ENCODE measurements at regions of chr11 and their contacts with region 1.

Region 1: GRCh38 chr11:61967116-61967923 is at the start of gene FTH1:
- DNase-seq: peak; percentile 77 to 95
- ATAC-seq: peak; percentile 16 to 62
- H3K4me3 ChIP-seq: peak within 1 kb of the TSS; percentile 96
- H3K27ac ChIP-seq: peak within 1 kb of the TSS; percentile 97 to 99
- H3K4me1 ChIP-seq: peaks cover 59% of the 10 kb centered on the region
- CTCF ChIP-seq: no peak
- EP300 ChIP-seq: no peak; a peak in 1 of 5 replicates
- POLR2A ChIP-seq: peak; percentile 93
- RAD21 ChIP-seq: peak in 1 of 2 experiments; percentile 44; a peak in 2 of 5 replicates
- polyA plus RNA-seq, gene FTH1: 2,791 and 4,959 TPM in 2 replicates

Region 2: DNA sequence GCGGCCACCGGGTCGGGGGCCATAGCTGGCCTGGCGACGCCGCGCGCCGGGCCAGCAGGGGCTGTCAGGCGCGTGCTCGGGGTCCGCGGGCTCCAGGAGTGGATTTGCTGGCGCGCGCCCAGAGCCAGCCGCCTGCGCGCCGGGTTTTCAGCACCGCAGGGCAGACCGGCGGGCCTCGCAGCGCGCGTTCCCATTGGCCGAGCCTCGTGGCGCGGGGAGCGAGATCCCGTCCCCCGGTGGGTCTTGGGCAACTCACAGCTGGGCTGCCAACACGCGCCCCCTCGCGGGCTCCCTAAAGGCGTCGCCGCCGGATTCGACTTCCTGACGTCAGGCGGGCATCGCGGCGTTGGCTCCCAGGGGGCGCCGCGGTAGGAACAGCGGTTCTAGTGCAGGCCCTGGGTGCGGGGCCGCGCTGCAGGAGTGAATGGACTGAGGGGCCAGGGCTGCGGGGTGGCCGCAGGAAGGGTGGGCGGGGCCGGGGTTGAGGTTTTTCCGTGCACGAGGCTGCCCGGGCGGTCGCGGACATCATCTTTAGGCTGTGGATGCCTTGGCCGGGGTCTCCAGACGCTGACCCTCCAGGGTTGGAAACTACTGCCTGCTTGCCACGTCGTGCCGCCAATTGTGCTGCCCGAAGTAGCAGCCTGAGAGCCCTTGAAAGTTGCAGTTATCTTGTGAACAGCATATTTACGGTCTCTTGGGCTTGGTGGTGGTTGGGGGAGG is 150.4 kb before region 1 on chr11 and contains the start of gene FADS1:
- CTCF ChIA-PET with region 1: interaction called, 4 read pairs
- POLR2A ChIA-PET with region 1: interaction called, 12 read pairs
- DNase-seq: peak; percentile 96 to 97
- ATAC-seq: peak; percentile 67 to 75
- H3K4me3 ChIP-seq: peak within 1 kb of the TSS; percentile 83
- H3K27ac ChIP-seq: peak within 1 kb of the TSS; percentile 98 to 99
- H3K4me1 ChIP-seq: peaks cover 44% of the 10 kb centered on the region
- CTCF ChIP-seq: peak; percentile 76
- EP300 ChIP-seq: 0 out of 5 replicates have a peak, but pooled peaks of 1 of the 2 experiments have one; percentile 10
- POLR2A ChIP-seq: peak; percentile 53
- RAD21 ChIP-seq: peak; percentile 42 to 60; a peak in 4 of 5 replicates
- polyA plus RNA-seq, gene FADS1: 163 and 175 TPM in 2 replicates

Region 3: GRCh38 chr11:61978703-61979661 is 11.7 kb after region 1 on chr11:
- CTCF ChIA-PET with region 1: interaction called, 3 read pairs
- POLR2A ChIA-PET with region 1: interaction called, 66 read pairs
- DNase-seq: no peak
- ATAC-seq: no peak
- H3K4me3 ChIP-seq: no peak overlapping the region
- H3K27ac ChIP-seq: peak overlapping the region; percentile 97 to 99
- H3K4me1 ChIP-seq: peaks cover 57% of the 10 kb centered on the region
- CTCF ChIP-seq: no peak
- EP300 ChIP-seq: no peak
- POLR2A ChIP-seq: no peak
- RAD21 ChIP-seq: no peak

Region 4: DNA sequence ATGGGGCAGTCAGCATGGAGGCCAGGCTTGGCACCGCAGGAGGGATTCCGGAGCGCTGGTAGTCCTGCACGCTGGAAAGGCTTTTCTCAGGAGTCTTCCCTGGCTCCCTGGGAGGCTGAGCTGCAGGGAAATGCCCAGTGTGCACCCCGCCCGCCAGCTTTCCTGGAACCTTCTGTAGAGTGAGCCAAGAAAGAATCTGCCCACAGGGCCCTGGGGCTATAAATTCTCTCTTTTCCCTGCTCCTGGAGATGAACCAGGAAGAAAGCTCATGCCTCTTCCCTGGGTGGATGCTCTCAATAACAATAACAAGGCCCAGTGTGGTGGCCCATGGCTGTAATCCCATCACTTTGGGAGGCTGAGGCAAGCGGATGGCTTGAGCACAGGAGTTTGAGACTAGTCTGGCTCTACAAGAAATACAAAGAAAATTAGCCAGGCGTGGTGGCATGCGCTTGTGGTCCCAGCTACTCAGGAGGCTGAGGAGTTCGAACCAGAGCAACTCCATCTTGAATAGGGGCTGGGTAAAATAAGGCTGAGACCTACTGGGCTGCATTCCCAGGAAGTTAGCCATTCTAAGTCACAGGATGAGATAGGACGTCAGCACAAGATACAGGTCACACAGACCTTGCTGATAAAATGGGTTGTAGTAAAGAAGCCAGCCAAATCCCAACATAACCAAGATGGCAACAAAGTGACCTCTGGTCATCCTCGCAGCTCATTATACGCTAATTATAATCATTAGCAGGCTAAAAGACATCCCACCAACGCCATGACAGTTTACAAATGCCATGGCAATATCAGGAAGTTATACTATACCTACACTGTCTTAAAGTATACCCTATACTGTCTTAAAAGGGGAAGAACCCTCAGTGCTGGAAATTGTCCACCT is 46.5 kb after region 1 on chr11:
- CTCF ChIA-PET with region 1: interaction called, 3 read pairs
- POLR2A ChIA-PET with region 1: interaction called, 16 read pairs
- DNase-seq: peak in 1 of 2 experiments; percentile 73
- ATAC-seq: peak; percentile 64 to 73
- H3K4me3 ChIP-seq: peak overlapping the region; percentile 19; the same call in 1 of the 3 replicates
- H3K27ac ChIP-seq: peak overlapping the region; percentile 88 to 90
- H3K4me1 ChIP-seq: peaks cover 49% of the 10 kb centered on the region
- CTCF ChIP-seq: no peak
- EP300 ChIP-seq: peak in 1 of 2 experiments; percentile 41; a peak in 1 of 5 replicates
- POLR2A ChIP-seq: no peak
- RAD21 ChIP-seq: no peak

Region 5: GRCh38 chr11:62025487-62026105 is 58.3 kb after region 1 on chr11:
- CTCF ChIA-PET with region 1: interaction called, 5 read pairs
- POLR2A ChIA-PET with region 1: interaction called, 75 read pairs
- DNase-seq: peak; percentile 86 to 95
- ATAC-seq: peak; percentile 94 to 98
- H3K4me3 ChIP-seq: peak overlapping the region; percentile 11; the same call in 2 of the 3 replicates
- H3K27ac ChIP-seq: peak overlapping the region; percentile 65 to 83
- H3K4me1 ChIP-seq: peaks cover 20% of the 10 kb centered on the region
- CTCF ChIP-seq: no peak
- EP300 ChIP-seq: peak; percentile 84 to 89; a peak in 3 of 5 replicates
- POLR2A ChIP-seq: no peak
- RAD21 ChIP-seq: peak; percentile 1 to 53; a peak in 3 of 5 replicates

Region 6: DNA sequence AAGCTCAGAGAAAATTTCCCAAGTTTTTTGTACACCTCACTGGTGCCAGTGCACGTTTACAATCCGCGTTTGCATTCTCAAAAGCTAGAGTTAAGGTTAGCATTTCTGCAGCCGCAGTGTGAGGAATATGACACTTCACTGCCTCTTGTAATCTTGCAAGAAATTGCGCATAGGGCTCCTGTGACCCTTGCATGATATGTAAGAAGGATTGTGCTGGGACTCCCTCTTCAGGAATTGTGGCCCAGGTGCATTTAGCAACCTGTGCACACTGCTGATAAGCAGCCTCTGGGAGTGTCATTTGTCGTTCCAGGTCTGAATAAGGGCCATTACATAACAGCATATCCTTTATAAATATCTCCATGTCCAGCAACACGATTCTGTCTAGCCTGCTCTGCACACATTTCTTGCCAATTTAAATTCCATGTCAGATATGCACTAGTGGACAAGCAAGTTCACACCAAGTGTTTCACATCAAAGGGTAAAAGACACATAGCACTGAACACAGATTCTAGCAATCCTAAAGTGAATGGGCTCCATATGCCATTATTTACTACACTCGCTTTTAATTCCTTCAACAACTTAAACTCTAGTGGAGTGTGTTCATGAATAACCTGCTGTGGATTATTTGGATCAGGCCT is 87.3 kb after region 1 on chr11:
- CTCF ChIA-PET with region 1: interaction called, 27 read pairs
- POLR2A ChIA-PET with region 1: interaction called, 22 read pairs
- DNase-seq: peak; percentile 53 to 92
- ATAC-seq: peak; percentile 94 to 99
- H3K4me3 ChIP-seq: no peak overlapping the region
- H3K27ac ChIP-seq: peak overlapping the region; percentile 79 to 87
- H3K4me1 ChIP-seq: peaks cover 16% of the 10 kb centered on the region
- CTCF ChIP-seq: peak; percentile 91
- EP300 ChIP-seq: no peak
- POLR2A ChIP-seq: no peak
- RAD21 ChIP-seq: peak; percentile 97 to 98